AG04449 (cell line): ENCODE measurements at regions of chr1 and their contacts with region 1.

Region 1: DNA sequence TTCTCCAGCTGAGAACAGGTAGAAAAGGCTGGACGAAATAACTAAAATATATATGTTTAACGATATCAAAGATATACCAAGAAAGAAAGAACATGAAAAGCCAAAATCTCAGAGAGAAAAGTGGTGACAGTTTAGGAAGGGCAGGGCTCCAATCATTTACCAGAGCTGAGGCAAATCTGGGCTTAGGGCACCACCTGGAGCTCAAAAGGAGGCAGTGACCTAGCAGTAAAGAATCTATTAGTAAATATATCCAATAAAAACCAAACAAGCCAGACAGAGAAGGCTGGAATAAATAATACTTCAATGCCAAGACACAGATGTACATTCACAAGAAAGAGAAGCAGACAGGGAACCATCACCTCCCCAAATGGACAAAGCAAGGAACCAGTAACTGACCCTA is 43.5 kb downstream of the CHIA start:
- DNase-seq: no peak
- H3K4me3 ChIP-seq: no peak overlapping the region
- CTCF ChIP-seq: peak; percentile 60

Region 2: DNA sequence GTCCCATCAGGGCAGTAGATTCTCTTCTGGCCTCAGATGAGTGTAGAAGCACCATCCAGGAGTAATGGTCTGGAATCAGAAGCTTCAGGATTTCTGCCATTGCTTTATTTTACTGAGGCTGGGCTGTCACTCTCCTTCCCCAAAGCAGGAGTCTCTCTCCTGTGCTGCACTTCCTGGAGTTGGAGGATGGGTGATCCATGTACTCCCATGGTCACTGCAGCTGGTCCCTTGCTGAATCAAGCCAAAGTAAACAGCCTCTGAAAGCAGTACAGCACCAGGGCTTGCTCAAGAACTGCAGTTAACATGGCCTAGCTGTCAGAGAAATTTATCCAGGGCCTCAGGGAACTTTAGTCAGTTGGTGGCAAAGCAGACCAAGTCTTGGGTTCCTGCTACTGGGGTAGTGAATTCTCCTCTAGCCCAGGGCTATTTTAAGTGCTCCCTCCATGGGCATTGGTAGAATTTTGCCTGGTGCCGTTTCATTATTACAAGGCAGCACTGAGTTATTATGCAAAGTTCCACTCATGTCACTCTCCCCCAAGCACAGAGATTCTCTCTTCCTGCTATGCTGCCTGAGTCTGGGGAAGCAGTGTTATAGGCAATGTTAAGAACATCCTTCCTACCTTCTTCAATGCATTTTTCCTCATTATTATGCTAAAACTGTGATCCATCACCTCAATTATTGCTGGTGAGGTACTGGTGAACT is 223.8 kb before region 1 on chr1:
- CTCF ChIA-PET with region 1: no interaction called
- POLR2A ChIA-PET with region 1: no interaction called
- DNase-seq: no peak
- H3K4me3 ChIP-seq: no peak overlapping the region
- CTCF ChIP-seq: no peak

Region 3: GRCh38 chr1:111197598-111198284 is 136.4 kb before region 1 on chr1:
- CTCF ChIA-PET with region 1: interaction called, 12 read pairs
- POLR2A ChIA-PET with region 1: no interaction called
- DNase-seq: no peak
- H3K4me3 ChIP-seq: no peak overlapping the region
- CTCF ChIP-seq: peak; percentile 64

Region 4: GRCh38 chr1:111227851-111228747 is 106.1 kb before region 1 on chr1:
- CTCF ChIA-PET with region 1: interaction called, 106 read pairs
- POLR2A ChIA-PET with region 1: no interaction called
- DNase-seq: peak; percentile 60
- H3K4me3 ChIP-seq: no peak overlapping the region
- CTCF ChIP-seq: no peak